ENCODE measurements at regions of chr9 and their contacts with region 1.

Region 1: DNA sequence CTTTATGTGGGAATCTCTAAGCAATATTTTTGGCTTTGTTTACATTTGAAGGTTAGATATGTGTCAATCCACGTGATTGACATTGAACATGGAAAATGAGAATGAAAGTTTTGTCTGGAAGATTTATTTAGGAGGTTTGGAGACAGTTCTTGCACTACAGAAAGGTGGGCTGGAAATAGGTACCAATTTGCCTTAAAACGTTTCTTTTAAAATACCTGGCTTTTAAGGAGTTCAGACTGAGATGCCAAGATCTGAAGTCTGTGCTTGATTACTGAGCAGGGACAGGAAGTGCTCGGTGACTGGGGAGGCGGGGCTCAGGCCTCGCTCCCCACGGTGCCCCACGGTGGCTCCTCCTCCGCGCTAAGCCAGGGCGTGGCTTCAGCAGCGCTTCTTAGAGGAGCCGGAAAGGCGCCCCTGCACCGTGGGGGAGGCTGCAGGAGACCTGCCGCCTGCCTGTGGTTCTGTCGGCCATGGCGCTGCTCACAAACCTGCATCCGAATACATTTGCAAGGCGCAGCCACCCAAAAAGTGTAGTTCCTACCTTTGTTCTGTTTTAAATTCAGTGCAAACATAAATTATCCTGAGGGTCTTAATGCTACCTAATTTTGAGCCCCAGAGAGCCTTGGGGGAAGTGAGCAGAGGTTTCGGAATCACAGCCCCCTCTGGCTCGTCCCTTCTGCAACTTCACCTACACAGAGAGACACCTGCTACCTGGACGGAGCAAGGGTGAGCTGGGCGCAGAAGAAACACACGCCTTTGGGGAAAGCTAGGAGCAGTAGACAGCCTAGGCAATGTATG is 49.2 kb downstream of the USP20 start:
- DNase-seq: peak; percentile 95

Region 2: GRCh38 chr9:129962889-129963703 is 78.7 kb after region 1 on chr9:
- intact Hi-C with region 1: loop called (anchors 5 kb)
- DNase-seq: peak; percentile 86

Region 3: DNA sequence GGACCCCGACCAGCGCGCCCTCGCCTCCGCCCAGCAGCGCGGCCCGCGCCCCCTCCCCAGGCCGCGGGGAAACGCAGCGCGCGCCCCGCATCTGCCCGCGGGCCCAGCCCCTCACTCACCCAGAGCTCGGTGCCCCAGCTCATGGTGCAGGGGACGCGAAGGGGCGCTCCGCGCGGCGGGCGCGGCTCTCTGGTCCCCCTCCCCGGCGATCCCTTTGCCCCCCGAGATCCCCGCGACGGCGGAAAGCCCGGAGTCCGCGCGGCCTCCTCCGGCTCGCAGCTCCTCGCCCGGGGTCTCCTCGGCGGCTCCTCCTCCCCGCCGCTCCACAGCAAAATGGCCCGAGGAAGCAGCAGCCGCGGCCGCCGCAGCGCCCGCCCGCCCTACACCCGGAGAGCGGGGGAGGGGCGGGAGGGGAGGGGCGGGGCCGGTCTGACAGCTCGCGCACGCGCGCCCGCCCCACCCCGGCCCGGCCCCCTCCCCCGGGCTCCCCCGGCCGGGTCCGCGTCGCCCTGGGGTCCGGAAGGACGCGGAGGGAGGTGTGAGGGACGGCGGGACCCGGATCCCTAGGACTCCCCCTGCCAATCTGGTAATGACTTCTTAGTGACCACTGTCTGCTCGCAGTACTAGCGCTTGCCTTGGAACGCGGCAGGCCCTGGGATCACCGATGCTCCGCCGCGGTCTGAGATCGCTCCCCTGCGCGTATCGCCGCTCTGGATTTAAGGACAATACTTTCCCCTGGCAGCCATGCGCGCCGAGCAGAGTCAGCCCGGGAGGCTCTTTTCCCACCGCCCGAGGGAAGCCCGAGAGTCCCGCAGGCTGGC is 158.6 kb after region 1 on chr9 and contains the start of gene FNBP1:
- intact Hi-C with region 1: loop called (anchors 2 kb)
- DNase-seq: peak; percentile 93
- total RNA-seq, gene FNBP1: 22.6 TPM

Measured in cardiac septum (tissue), 1 donor.